ENCODE measurements at regions of chr7 and their contacts with region 1.

Region 1: GRCh38 chr7:133434055-133434865 is 181.4 kb downstream of the EXOC4 start:
- DNase-seq: no peak
- H3K4me3 ChIP-seq: no peak overlapping the region
- CTCF ChIP-seq: peak; percentile 42

Region 2: DNA sequence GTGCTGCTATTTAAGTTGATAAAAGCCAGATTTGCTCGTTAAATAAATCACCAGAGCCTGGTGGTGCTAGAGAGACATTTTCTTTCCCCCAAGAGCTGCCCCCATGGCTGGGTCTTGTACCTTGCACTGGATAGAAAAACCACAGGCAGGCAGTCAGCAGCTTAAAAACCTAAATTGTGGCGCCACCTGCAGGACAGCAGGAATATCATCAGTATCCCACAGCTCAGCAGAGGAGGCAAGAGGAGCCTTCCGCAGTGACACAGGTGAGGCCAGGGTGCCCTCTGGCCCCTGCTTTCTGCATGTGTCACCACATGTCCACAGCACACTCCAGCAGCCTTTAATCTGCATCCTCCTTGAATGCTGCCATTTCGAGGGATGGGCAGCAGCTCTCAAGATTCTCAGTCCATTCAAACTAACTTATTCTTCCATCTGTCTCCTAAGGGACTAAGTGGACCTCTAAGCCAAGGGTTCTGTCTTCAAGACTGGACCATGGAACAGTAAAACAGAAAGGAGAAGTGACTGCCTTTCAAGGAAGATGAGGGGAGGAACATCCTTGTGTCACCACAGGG is 853.5 kb before region 1 on chr7:
- CTCF ChIA-PET with region 1: interaction called, 12 read pairs
- POLR2A ChIA-PET with region 1: no interaction called
- DNase-seq: peak; percentile 21
- H3K4me3 ChIP-seq: no peak overlapping the region
- CTCF ChIP-seq: peak; percentile 81

Region 3: DNA sequence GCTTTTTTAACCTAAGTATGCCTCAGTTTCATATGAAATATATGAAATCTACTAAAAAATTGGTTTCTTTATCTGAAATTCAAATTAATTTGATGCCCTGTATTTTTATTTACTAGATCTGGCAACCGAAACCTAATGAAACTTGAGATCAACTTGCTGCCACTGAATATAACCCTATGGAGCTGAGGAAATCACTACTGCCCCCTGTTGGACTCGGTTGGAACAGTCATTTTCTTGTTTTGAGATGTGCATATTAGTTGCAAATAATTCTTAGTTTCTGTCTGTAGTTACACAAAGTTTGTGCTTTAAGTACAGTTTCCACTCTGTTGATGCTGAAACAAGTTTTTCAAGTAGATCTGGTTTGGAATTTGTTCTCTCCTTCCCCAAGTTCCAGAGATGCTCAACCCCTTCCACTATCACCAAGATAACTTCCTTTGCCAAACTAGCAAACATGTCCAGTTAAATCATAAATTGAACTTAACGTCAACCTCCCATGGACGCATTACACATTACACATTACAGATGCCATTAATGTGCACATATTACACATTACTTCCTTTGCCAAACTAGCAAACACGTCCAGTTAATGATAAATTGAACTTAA is 203.6 kb before region 1 on chr7:
- CTCF ChIA-PET with region 1: interaction called, 16 read pairs
- POLR2A ChIA-PET with region 1: no interaction called
- DNase-seq: no peak
- H3K4me3 ChIP-seq: no peak overlapping the region
- CTCF ChIP-seq: peak; percentile 62

Region 4: DNA sequence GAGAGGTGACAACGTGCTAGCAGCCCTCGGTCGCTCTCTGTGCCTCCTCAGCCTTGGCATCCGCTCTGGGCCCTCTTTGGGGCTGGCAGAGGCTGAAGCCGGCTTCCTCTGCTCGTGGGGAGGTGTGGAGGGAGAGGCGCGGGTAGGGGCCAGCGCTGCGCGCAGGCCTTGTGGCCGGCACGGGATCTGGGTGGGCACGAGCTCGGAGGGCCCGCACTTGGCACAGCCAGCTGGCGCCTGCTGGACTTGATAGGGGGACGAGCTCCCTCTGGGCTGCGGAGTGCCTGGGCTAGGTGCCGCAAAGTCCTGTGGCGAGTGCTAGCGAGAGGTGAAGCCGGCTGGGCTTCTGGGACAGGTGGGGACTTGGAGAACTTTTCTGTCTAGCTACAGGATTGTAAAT is 10.6 kb before region 1 on chr7:
- CTCF ChIA-PET with region 1: interaction called, 13 read pairs
- POLR2A ChIA-PET with region 1: no interaction called
- DNase-seq: no peak
- H3K4me3 ChIP-seq: no peak overlapping the region
- CTCF ChIP-seq: no peak

Region 5: DNA sequence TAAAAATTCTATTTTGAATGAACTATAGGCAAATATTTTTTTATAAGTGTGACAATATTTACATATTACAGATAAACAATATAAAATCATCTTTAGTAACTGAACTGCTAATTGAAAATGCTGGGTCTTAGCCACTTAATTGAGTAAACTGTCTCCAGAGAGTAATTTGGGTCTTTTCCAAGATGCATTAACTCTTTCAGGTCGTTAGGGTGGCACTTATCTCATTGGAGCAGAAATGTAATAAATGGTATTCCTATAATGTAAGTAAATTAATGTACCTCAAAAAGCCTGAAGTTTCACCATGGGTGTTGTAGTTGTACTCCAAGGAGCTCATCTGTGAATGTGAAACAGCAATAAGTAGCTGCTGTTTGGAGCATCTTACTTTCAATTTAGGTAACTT is 27.2 kb after region 1 on chr7:
- CTCF ChIA-PET with region 1: no interaction called
- POLR2A ChIA-PET with region 1: no interaction called
- DNase-seq: no peak
- H3K4me3 ChIP-seq: no peak overlapping the region
- CTCF ChIP-seq: no peak

Region 6: DNA sequence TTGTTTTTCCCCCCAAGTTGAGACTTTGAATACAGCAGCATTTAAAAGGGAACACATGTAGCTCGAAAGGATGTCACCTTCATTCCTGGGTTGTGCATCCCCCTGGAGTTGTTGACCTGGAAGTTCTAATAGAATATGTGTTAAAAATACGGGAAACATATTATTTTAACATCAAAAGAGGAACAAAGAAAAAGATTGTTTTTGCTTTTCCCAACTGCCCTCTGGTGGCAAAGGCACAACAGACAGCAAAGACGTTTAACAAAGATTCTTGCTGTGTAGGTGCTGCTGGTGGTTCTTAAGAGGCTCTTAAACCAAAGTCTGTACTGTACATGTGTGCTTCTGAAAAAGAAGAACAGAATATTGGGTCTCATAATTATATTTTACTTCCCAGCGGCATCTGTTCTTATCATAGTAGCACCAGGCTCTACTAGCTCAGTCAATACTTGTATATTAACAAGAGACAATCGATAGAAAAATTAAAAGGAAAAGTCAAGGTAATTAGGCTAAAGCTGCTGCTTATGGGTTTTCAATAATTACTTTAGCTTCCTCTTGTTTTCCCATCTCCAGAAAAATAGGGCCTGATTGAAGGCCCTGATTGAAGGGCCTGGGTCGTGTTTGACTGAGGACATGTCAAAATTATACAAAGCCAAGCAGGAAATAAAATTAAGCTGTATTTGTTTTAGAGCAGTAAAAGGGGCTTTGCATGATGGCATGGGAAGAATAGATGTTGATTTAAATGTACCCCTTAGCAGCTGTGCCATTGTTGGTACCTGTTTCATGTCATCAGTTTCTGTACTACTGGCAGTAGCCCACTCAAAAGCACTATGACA is 308.7 kb after region 1 on chr7:
- CTCF ChIA-PET with region 1: interaction called, 13 read pairs
- POLR2A ChIA-PET with region 1: no interaction called
- DNase-seq: no peak
- H3K4me3 ChIP-seq: no peak overlapping the region
- CTCF ChIP-seq: peak; percentile 61